ENCODE measurements at regions of chr3 and their contacts with region 1.

Region 1: GRCh38 chr3:170221924-170222646 is at the start of gene PRKCI:
- DNase-seq: peak; percentile 96
- ATAC-seq: peak; percentile 95
- H3K4me3 ChIP-seq: peak within 1 kb of the TSS; percentile 90
- H3K27ac ChIP-seq: peak within 1 kb of the TSS; percentile 79
- H3K4me1 ChIP-seq: peaks cover 7% of the 10 kb centered on the region
- H3K27me3 ChIP-seq: no peaks in the 10 kb centered on the region
- CTCF ChIP-seq: no peak
- total RNA-seq, gene PRKCI: 39.5 and 42.2 TPM in 2 replicates

Region 2: DNA sequence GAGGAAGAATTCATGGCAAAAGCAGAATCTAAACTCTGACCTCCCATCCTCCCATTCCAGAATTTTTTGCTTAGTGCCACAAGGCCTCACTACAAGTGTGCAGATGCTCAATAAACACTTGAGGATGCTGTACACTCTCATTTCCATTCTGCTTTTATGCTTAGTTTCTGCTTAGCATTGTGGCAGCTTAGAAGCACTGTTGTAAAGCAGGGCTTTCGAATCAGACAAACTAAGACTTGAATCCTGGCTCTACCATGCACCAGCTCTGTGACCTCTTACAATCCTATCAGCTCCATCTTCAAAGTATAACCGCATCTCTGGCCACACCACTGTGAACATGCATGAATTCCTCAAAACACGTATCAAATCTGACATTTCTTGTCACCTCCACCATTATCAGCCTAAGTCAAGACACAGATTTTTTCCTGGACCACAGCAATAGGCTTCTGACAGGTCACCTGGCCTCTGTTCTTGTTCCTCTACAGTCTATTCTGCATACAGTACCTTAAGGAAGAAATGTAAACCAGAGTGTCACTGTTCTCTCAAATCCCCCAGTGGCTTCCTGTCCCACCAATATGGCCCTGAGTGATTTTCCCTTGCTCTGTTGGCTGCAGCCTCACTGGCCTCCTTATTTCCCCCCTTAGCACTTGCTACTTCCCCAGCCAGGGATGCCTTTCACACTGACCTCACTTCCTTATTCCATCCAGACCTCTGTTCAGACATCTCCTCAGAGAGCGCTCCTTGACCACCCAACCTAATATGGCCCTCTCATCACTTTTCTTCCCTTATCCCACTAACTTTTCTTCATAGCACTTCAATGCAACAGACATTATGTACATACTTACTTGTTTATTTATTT is 32.5 kb before region 1 on chr3:
- CTCF ChIA-PET with region 1: no interaction called
- POLR2A ChIA-PET with region 1: no interaction called
- intact Hi-C with region 1: loop called (anchors 2 kb)
- DNase-seq: no peak
- ATAC-seq: peak; percentile 29
- H3K4me3 ChIP-seq: no peak overlapping the region; the same call in 1 of the 2 replicates
- H3K27ac ChIP-seq: no peak overlapping the region
- H3K4me1 ChIP-seq: no peaks in the 10 kb centered on the region
- H3K27me3 ChIP-seq: no peaks in the 10 kb centered on the region
- CTCF ChIP-seq: no peak; the same call in 1 of the 2 replicates